ENCODE measurements at regions of chr12 and their contacts with region 1.

Region 1: DNA sequence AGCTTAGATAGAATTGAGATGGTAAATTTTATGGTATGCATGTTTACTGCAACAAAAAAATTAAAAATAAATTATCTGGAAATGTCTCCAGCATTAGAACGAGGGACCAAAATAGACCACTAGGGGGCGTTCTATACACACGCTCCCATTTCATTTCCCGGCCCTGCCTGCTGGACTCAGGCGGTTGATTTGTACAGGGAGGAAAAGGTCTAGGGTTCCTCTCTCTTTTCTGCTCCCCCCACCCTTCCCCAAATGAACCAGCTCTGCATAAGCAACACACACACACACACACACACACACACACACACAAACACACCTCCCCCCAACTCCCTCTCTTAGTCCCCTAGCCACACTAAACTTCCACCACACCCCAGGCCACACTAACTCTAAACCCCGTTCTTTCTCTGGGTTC is 7.8 kb upstream of the DTX1 start:
- DNase-seq: peak; percentile 24
- H3K4me3 Mint-ChIP-seq: no peak overlapping the region
- H3K27ac Mint-ChIP-seq: no peak overlapping the region
- H3K4me1 Mint-ChIP-seq: no peaks in the 10 kb centered on the region
- H3K27me3 Mint-ChIP-seq: peaks cover 14% of the 10 kb centered on the region

Region 2: DNA sequence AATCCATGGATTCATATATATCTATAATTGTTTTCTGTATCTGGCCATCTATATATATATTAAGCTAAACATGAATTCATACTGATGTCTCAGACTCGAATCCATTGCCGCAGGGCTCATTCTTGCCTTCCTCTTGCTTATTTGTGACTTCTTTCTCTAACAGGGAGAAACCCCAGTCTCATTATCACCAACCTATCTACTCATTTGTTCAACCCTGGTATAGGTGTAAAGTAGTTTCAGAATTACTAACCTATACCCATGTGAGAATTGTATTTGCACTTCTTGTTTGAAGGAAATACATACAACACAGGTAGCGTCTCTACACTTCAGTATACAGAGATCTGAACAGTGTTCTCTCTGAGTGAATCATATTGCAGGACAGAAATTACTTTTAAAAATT is 552.2 kb before region 1 on chr12:
- intact Hi-C with region 1: no loop called
- DNase-seq: no peak
- H3K4me3 Mint-ChIP-seq: no peak overlapping the region
- H3K27ac Mint-ChIP-seq: peak overlapping the region; percentile 29
- H3K4me1 Mint-ChIP-seq: peaks cover 16% of the 10 kb centered on the region
- H3K27me3 Mint-ChIP-seq: no peaks in the 10 kb centered on the region

Region 3: GRCh38 chr12:113098446-113098896 is 49.7 kb after region 1 on chr12:
- intact Hi-C with region 1: loop called (anchors 2 kb)
- DNase-seq: peak; percentile 32
- H3K4me3 Mint-ChIP-seq: no peak overlapping the region
- H3K27ac Mint-ChIP-seq: no peak overlapping the region
- H3K4me1 Mint-ChIP-seq: peaks cover 2% of the 10 kb centered on the region
- H3K27me3 Mint-ChIP-seq: no peaks in the 10 kb centered on the region

Region 4: GRCh38 chr12:113174461-113175384 is 126.0 kb after region 1 on chr12:
- intact Hi-C with region 1: loop called (anchors 1 kb)
- DNase-seq: peak; percentile 63
- H3K4me3 Mint-ChIP-seq: no peak overlapping the region
- H3K27ac Mint-ChIP-seq: no peak overlapping the region
- H3K4me1 Mint-ChIP-seq: no peaks in the 10 kb centered on the region
- H3K27me3 Mint-ChIP-seq: no peaks in the 10 kb centered on the region

Region 5: GRCh38 chr12:113333877-113334785 is 285.4 kb after region 1 on chr12:
- intact Hi-C with region 1: no loop called
- DNase-seq: no peak
- H3K4me3 Mint-ChIP-seq: peak overlapping the region; percentile 88
- H3K27ac Mint-ChIP-seq: peak overlapping the region; percentile 4
- H3K4me1 Mint-ChIP-seq: peaks cover 18% of the 10 kb centered on the region
- H3K27me3 Mint-ChIP-seq: peaks cover 2% of the 10 kb centered on the region

Measured in activated T-helper 2 cell treated with anti-CD3 and anti-CD28 coated beads, Interferon-gamma antibody, Interleukin-2, Interleukin-4, amounts not matched to agents 10 μg/mL and 5 μg/mL and 100 μg/mL, durations not matched to agents 14 hours and 24 hours and 36 hours (primary cell).